Aorta (tissue), 5 donors: ENCODE measurements at regions of chr1 and their contacts with region 1.

Region 1: DNA sequence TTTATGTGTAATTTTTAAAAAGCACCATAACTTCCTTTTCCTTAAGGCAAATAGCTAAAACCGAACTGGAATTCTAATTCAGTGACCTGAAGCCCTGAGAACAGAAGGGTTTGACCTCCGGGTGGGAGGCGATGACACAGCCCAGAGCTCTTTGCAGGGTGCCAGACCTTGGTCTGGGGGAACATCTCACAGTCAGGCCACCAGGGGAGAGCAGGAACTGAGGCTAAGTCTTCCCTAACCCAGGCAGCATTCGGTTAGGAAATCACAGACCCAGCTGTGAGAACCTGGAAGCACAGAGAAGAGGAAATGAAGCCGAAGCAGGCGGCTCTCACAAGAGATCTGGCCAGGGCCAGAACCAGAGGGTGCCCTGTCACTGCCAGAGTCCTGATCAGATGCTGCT is 444.8 kb downstream of the TTLL7 start:
- DNase-seq: no peak
- ATAC-seq: no peak
- H3K4me3 ChIP-seq: no peak overlapping the region
- H3K27ac ChIP-seq: peak overlapping the region in 1 of 2 donors; percentile 92
- H3K4me1 ChIP-seq: peaks cover 10 to 11% of the 10 kb centered on the region in 2 donors
- H3K27me3 ChIP-seq: no peaks in the 10 kb centered on the region

Region 2: GRCh38 chr1:83508485-83509151 is 45.6 kb before region 1 on chr1:
- intact Hi-C with region 1: loop called in 1 of 2 experiments (anchors 5 kb)
- DNase-seq: peak in 1 of 2 donors; percentile 44
- ATAC-seq: peak; percentile 70
- H3K4me3 ChIP-seq: peak overlapping the region in 1 of 2 donors; percentile 18
- H3K27ac ChIP-seq: peak overlapping the region; percentile 67 to 89
- H3K4me1 ChIP-seq: peaks cover 0 to 5% of the 10 kb centered on the region in 2 donors
- H3K27me3 ChIP-seq: no peaks in the 10 kb centered on the region

Region 3: DNA sequence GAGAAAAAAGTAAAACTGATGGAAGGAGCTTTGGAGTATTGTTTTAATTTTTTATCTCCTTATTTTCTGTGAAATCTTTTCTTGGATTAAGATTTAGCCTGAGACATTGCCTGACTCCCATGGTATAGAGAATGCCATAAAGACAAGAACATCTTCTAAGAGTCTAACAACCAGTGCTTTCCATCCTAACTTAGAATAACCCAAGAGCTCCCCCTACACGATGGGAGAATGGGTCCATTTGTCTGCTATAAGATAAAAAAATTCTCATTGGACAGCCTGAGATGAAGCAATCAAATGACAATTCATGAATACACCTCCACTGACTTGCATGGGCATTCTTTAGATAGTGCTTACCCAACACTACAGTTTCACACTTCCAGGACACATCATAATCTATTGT is 33.4 kb before region 1 on chr1:
- intact Hi-C with region 1: no loop called
- DNase-seq: no peak
- ATAC-seq: no peak
- H3K4me3 ChIP-seq: no peak overlapping the region
- H3K27ac ChIP-seq: no peak overlapping the region
- H3K4me1 ChIP-seq: no peaks in the 10 kb centered on the region
- H3K27me3 ChIP-seq: no peaks in the 10 kb centered on the region

Region 4: DNA sequence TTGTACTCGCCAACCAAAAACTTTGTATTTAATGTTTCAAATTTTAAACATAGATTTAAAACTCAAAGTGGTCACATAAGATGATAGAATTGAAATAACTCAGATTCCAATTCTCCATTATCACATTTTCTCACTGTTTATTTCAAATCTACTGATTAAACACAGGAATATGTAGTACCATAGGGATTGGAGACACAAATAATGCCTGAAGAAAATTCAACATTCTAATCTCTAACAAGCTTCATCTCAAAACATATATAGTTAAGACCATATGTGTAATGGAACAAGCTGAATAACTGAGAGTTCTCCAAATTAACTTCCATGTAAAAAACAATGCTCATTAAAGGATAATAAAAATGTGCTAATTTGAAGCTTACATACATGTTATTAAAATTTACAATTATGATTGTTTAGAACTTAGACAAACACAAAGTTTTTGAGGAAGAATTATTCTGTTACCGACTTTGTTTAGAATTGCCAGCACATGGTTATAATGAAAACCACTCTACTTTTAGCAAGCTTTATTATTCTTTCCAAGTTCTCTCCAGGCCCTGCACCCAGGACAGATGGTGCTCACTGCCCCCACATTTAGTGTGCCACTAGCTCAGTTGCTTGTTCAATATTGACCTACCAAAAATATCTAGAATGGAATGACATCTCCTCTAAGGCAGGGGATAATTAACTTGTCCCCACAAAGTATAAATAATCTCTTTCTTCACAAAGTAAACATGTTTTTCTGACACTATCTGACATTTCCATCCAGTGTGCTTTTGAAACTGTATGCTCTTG is 22.5 kb before region 1 on chr1:
- intact Hi-C with region 1: no loop called
- DNase-seq: no peak
- ATAC-seq: no peak
- H3K4me3 ChIP-seq: no peak overlapping the region
- H3K27ac ChIP-seq: peak overlapping the region in 1 of 2 donors; percentile 21
- H3K4me1 ChIP-seq: no peaks in the 10 kb centered on the region
- H3K27me3 ChIP-seq: no peaks in the 10 kb centered on the region

Region 5: DNA sequence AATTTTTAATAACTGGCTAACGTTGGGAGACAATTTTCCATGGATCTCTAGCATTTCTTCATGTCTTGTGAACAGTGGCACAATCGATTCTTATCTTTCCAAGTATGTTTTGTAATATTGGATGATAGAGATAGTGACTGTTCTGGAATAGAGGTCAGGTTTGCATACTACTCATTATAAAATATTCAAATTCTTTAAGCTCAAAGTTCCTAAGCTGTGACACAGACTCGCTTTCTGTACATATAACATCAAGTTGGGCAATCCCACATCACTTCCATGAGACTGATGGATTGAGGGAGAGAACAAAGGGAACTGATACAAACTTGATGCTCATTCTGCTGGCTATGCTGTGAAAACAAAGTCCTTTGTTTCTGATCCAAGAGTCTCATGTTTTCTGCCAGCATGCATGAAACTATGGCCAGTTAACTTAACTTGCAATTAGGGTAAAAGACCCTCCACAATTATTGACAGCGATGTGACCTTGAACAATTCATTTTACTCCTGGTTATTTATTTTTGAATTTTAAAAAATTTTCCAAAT is 52.3 kb after region 1 on chr1:
- intact Hi-C with region 1: no loop called
- DNase-seq: no peak
- ATAC-seq: no peak
- H3K4me3 ChIP-seq: no peak overlapping the region
- H3K27ac ChIP-seq: no peak overlapping the region
- H3K4me1 ChIP-seq: no peaks in the 10 kb centered on the region
- H3K27me3 ChIP-seq: no peaks in the 10 kb centered on the region

Region 6: DNA sequence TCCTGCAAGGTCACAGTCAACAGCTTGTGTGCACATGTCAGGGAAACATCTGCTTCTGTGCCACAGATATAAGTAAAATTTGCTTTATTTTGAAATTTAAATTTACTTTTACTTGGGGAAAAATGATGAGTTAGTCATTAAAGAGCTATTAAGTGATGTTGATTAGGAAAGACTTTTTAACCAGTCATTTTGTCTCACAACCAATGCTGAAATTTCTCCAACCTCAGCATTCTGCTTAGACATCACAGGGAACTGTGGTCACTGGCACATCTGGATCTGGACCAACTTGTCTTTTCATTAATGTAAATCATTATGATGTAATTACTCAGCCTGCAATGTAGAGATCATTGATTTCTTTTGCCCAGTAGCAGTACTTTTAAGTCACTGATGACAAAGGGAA is 143.8 kb after region 1 on chr1:
- intact Hi-C with region 1: loop called in 1 of 2 experiments (anchors 5 kb)
- DNase-seq: no peak
- ATAC-seq: no peak
- H3K4me3 ChIP-seq: no peak overlapping the region
- H3K27ac ChIP-seq: no peak overlapping the region
- H3K4me1 ChIP-seq: peaks cover 0 to 2% of the 10 kb centered on the region in 2 donors
- H3K27me3 ChIP-seq: no peaks in the 10 kb centered on the region